BJ (cell line): ENCODE measurements at regions of chr3 and their contacts with region 1.

Region 1: GRCh38 chr3:73508330-73508954 is 116.3 kb downstream of the PDZRN3 start:
- DNase-seq: no peak
- H3K4me3 ChIP-seq: no peak overlapping the region
- H3K27me3 ChIP-seq: no peaks in the 10 kb centered on the region
- CTCF ChIP-seq: peak; percentile 80

Region 2: GRCh38 chr3:73520865-73521461 is 12.5 kb after region 1 on chr3:
- CTCF ChIA-PET with region 1: interaction called, 16 read pairs
- POLR2A ChIA-PET with region 1: no interaction called
- DNase-seq: no peak
- H3K4me3 ChIP-seq: no peak overlapping the region
- H3K27me3 ChIP-seq: no peaks in the 10 kb centered on the region
- CTCF ChIP-seq: peak; percentile 18; the same call in 1 of the 2 replicates

Region 3: DNA sequence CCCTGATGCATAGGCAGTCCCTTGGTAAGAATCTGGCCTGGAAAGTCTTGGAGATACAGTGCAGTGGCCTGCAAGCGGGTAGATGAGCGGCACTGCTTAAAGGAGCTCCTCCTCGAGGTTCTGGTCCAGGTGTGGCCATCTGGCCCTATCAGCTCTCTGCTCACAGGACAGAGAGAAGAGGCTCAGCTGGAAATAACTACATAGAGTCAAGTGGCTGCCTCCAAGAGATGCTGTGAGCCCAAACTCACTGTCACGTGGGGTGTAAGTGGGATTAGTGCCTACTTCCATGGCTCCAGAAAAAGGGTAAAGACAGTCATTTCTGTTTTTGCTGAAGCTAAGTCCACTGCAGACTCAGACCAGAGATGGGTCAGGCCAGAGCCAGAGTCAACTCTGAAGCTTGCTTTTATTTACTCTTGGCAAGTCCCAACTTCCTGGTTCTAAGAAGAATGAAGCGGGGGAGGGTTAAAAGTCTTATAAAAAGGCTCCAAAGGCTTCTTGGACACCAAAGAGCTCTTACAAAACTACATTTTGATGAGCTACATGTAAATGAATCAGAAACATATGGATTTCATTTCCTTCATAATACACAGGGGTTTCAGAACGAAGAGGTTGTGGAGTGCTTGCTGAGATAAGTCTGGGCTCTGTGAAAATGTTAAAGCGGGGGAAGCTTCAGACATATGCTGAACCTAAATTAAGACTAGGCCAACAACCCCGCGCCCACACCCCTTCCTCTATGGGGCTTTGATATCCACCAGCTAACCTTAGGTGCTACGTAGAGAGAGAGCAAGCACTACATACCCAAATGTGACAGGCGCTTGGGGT is 39.2 kb after region 1 on chr3:
- CTCF ChIA-PET with region 1: interaction called, 18 read pairs
- POLR2A ChIA-PET with region 1: no interaction called
- DNase-seq: peak; percentile 94
- H3K4me3 ChIP-seq: no peak overlapping the region
- H3K27me3 ChIP-seq: no peaks in the 10 kb centered on the region
- CTCF ChIP-seq: no peak

Region 4: DNA sequence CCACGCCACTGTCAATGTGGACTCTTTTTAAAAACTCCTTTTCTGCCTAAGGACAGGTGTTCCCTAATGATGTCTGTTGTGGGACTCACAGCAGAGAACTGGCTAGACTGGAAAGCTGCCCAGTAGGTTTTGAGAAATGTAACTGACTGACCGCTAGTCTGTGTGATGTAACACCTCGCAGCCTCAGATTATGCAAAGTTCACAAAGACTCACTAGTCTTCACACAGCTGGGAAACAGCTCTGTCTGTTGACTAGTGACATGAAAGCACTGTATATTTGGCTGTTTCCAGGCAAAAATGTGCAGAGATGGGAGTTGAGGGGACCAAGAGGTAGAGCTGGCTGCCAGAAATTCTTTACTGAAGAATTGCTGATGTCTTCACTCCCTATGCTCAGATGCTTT is 106.0 kb after region 1 on chr3:
- CTCF ChIA-PET with region 1: interaction called, 11 read pairs
- POLR2A ChIA-PET with region 1: no interaction called
- DNase-seq: no peak
- H3K4me3 ChIP-seq: no peak overlapping the region
- H3K27me3 ChIP-seq: no peaks in the 10 kb centered on the region
- CTCF ChIP-seq: no peak

Region 5: GRCh38 chr3:73624821-73625665 is 116.6 kb after region 1 on chr3 and contains the start of gene PDZRN3:
- CTCF ChIA-PET with region 1: interaction called, 55 read pairs
- POLR2A ChIA-PET with region 1: interaction called, 6 read pairs
- DNase-seq: no peak
- H3K4me3 ChIP-seq: peak within 1 kb of the TSS; percentile 80
- H3K27me3 ChIP-seq: no peaks in the 10 kb centered on the region
- CTCF ChIP-seq: no peak
- polyA plus RNA-seq, gene PDZRN3: 4.9 and 5.1 TPM in 2 replicates

Region 6: DNA sequence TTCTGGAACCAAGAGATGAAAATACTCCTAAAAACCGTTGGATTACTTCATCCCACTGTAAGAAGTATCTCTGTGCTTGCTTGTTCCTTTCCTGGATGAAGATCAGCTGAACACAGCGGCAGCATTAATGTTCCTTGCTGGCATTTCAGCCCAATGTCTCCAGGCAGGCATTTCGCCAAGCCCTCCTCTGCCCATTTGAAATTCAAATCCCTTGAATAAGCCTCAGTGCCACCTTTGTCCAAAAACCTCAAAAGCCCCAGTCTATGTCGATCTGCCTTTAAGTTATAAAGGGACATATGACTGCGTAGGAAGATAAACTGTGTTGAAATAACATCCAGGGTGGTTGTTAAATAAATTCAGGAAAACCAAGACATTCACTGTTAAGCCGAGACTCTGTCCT is 273.1 kb after region 1 on chr3:
- CTCF ChIA-PET with region 1: interaction called, 10 read pairs
- POLR2A ChIA-PET with region 1: no interaction called
- DNase-seq: no peak
- H3K4me3 ChIP-seq: no peak overlapping the region
- H3K27me3 ChIP-seq: no peaks in the 10 kb centered on the region
- CTCF ChIP-seq: no peak

Region 7: GRCh38 chr3:73848173-73848906 is 339.9 kb after region 1 on chr3:
- CTCF ChIA-PET with region 1: interaction called, 11 read pairs
- POLR2A ChIA-PET with region 1: no interaction called
- DNase-seq: no peak
- H3K4me3 ChIP-seq: no peak overlapping the region
- H3K27me3 ChIP-seq: no peaks in the 10 kb centered on the region; the same call in 1 of the 2 replicates
- CTCF ChIP-seq: peak; percentile 70

Region 8: GRCh38 chr3:74978684-74979083 is 1470.2 kb after region 1 on chr3:
- CTCF ChIA-PET with region 1: no interaction called
- POLR2A ChIA-PET with region 1: no interaction called
- DNase-seq: no peak
- H3K4me3 ChIP-seq: no peak overlapping the region
- H3K27me3 ChIP-seq: no peaks in the 10 kb centered on the region
- CTCF ChIP-seq: no peak